ENCODE measurements at regions of chr5 and their contacts with region 1.

Region 1: DNA sequence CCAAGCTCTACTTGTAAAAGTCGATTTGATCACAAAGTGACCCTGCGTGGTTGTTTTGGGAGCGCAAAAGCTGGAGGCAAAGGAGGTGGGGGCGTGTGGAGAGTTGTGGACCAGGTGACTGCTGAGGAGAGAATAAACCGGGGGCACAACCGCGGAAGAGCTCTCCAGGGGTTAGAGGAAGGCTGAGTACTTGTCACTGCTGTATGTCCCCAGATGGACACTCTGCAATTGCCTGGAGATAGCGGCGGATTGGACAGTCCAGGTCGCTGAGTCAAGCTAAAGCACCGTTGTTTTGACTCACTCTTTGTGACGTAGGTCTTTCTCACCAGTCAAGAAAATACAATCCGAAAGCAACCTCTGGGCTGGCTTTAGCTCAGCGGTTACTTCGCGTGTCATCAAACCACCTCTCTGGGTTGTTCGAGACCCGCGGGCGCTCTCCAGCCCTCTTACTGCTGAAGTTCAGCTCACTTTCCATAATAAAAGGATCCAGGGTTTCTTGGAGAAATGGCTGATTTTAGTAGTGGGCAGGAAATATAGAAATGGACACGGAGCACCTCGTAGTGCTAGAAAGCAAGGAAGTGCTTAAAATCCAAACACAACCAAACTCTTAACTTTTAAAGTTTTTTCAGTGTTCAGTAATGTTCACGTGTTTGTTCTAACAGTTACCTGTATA is 25.7 kb downstream of the ZMAT2 start:
- DNase-seq: peak; percentile 73 to 96 (median 84)
- ATAC-seq: peak; percentile 98
- H3K4me3 ChIP-seq: peak overlapping the region; percentile 83
- H3K27ac ChIP-seq: peak overlapping the region; percentile 94
- H3K4me1 ChIP-seq: no peaks in the 10 kb centered on the region; a peak in 1 of 5 replicates
- H3K27me3 ChIP-seq: no peaks in the 10 kb centered on the region
- CTCF ChIP-seq: no peak; a peak in 1 of 6 replicates
- EP300 ChIP-seq: peak; percentile 88
- POLR2A ChIP-seq: peak; percentile 74
- RAD21 ChIP-seq: no peak

Region 2: GRCh38 chr5:140362860-140363630 is 362.9 kb before region 1 on chr5:
- CTCF ChIA-PET with region 1: interaction called, 4 read pairs
- POLR2A ChIA-PET with region 1: interaction called, 4 read pairs
- in situ Hi-C with region 1: no loop called
- intact Hi-C with region 1: loop called (anchors 5 kb)
- DNase-seq: peak; percentile 85 to 92 (median 90)
- ATAC-seq: peak; percentile 95
- H3K4me3 ChIP-seq: peak overlapping the region; percentile 37
- H3K27ac ChIP-seq: no peak overlapping the region
- H3K4me1 ChIP-seq: peaks cover 9 to 14% of the 10 kb centered on the region in 2 experiments; a peak in 4 of 5 replicates
- H3K27me3 ChIP-seq: no peaks in the 10 kb centered on the region
- CTCF ChIP-seq: peak; percentile 94 to 98 (median 97)
- EP300 ChIP-seq: no peak
- POLR2A ChIP-seq: no peak
- RAD21 ChIP-seq: peak; percentile 52 to 82

Region 3: DNA sequence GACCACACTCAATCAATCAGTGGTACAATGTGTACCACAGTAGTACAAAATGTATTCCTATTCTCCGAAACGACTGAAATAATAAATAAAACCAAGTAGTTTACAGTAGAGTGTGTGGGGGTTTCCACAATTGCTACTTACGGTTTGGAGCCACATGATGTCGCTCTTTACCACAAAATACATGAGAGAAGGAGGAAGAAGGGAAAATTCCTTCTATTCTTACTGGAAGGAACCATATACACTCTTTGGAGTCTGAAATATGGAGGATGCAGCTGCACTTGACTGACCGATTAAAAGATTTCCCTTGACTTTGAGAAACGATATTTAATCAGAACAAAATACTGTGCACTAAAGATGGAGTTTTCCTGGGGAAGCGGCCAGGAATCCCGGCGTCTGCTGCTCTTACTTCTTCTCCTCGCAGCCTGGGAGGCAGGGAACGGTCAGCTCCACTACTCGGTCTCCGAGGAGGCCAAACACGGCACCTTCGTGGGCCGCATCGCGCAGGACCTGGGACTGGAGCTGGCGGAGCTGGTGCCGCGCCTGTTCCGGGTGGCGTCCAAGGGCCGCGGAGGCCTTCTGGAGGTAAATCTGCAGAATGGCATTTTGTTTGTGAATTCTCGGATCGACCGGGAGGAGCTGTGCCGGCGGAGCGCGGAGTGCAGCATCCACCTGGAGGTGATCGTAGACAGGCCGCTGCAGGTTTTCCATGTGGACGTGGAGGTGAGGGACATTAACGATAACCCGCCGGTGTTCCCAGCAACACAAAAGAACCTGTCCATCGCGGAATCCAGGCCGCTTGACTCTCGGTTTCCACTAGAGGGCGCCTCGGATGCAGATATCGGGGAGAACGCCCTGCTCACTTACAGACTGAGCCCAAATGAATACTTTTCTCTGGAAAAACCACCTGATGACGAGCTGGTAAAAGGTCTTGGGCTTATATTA is 81.2 kb after region 1 on chr5 and contains the start of gene PCDHA4:
- CTCF ChIA-PET with region 1: no interaction called
- POLR2A ChIA-PET with region 1: no interaction called
- in situ Hi-C with region 1: no loop called
- intact Hi-C with region 1: no loop called
- DNase-seq: peak in 3 of 4 experiments; percentile 13 to 47 (median 17)
- ATAC-seq: peak; percentile 86
- H3K4me3 ChIP-seq: no peak within 1 kb of the TSS
- H3K27ac ChIP-seq: no peak within 1 kb of the TSS
- H3K4me1 ChIP-seq: peaks cover 0 to 11% of the 10 kb centered on the region in 2 experiments; a peak in 2 of 5 replicates
- H3K27me3 ChIP-seq: no peaks in the 10 kb centered on the region
- CTCF ChIP-seq: peak; percentile 38 to 58 (median 56)
- EP300 ChIP-seq: no peak
- POLR2A ChIP-seq: no peak
- RAD21 ChIP-seq: peak in 1 of 2 experiments; percentile 22; a peak in 1 of 4 replicates
- polyA plus RNA-seq, gene PCDHA4: not detected

Measured in K562 (cell line).